ENCODE measurements at regions of chr12 and their contacts with region 1.

Region 1: GRCh38 chr12:31288381-31288780 is 37.6 kb downstream of the SINHCAF start:
- DNase-seq: no peak
- H3K4me3 ChIP-seq: no peak overlapping the region
- H3K27ac ChIP-seq: no peak overlapping the region
- H3K4me1 ChIP-seq: no peaks in the 10 kb centered on the region
- H3K27me3 ChIP-seq: no peaks in the 10 kb centered on the region
- CTCF ChIP-seq: no peak

Region 2: DNA sequence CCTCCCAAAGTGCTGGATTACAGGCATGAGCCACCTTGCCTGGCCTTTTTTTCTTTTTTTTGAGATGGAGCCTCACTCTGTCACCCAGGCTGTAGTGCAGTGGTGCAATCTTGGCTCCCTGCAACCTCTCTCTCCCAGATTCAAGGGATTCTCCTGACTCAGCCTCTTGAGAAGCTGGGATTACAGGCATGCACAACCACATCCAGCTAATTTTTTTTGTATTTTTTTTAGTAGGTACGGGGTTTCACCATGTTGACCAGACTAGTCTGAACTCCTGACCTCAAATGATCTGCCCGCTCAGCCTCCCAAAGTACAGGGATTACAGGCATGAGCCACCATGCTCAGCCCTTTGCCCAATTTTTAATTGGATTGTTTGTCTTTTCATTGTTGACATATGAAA is 20.4 kb before region 1 on chr12:
- CTCF ChIA-PET with region 1: interaction called, 5 read pairs
- POLR2A ChIA-PET with region 1: interaction called, 14 read pairs
- intact Hi-C with region 1: no loop called
- DNase-seq: no peak
- H3K4me3 ChIP-seq: no peak overlapping the region
- H3K27ac ChIP-seq: no peak overlapping the region
- H3K4me1 ChIP-seq: no peaks in the 10 kb centered on the region
- H3K27me3 ChIP-seq: no peaks in the 10 kb centered on the region
- CTCF ChIP-seq: no peak

Region 3: DNA sequence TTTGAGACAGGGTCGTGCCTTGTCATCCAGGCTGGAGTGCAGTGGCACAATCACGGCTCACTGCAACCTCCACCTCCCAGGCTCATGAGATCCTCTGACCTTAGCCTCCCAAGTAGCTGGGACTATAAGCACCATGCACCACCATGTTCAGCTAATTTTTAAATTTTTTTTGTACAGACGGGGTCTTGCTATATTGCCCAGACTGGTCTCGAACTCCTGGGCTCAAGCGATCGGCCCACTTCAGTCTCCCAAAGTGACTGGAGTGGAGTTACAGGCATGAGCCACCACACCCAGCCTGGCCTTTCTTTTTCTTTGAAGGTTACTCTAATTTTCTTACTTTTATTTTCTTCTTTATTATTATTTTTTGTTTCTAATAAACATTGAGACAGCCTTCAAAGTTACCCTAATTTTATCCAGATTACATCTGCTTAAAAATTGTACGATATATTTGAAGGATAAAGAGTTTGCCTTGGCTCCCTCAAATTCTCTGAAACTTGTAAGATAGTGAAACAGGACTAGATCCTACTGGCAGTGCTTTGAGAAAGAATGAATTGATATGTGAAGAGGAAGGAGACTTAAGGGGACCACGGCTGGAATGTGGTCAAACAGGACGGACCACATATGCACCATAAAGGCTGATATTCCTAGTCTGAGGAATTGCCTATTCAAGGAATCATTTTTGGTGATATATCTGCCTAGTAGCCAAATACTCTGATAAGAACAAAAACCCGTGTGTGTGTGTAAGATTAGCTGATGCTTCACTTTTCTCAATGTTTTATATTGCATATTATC is 51.6 kb after region 1 on chr12:
- CTCF ChIA-PET with region 1: no interaction called
- POLR2A ChIA-PET with region 1: interaction called, 10 read pairs
- intact Hi-C with region 1: no loop called
- DNase-seq: peak; percentile 60 to 70
- H3K4me3 ChIP-seq: no peak overlapping the region; the same call in 1 of the 2 replicates
- H3K27ac ChIP-seq: peak overlapping the region; percentile 25; the same call in 1 of the 2 replicates
- H3K4me1 ChIP-seq: peaks cover 15% of the 10 kb centered on the region
- H3K27me3 ChIP-seq: no peaks in the 10 kb centered on the region
- CTCF ChIP-seq: no peak

Measured in PC-9 (cell line).